ENCODE measurements at regions of chr18 and their contacts with region 1.

Region 1: DNA sequence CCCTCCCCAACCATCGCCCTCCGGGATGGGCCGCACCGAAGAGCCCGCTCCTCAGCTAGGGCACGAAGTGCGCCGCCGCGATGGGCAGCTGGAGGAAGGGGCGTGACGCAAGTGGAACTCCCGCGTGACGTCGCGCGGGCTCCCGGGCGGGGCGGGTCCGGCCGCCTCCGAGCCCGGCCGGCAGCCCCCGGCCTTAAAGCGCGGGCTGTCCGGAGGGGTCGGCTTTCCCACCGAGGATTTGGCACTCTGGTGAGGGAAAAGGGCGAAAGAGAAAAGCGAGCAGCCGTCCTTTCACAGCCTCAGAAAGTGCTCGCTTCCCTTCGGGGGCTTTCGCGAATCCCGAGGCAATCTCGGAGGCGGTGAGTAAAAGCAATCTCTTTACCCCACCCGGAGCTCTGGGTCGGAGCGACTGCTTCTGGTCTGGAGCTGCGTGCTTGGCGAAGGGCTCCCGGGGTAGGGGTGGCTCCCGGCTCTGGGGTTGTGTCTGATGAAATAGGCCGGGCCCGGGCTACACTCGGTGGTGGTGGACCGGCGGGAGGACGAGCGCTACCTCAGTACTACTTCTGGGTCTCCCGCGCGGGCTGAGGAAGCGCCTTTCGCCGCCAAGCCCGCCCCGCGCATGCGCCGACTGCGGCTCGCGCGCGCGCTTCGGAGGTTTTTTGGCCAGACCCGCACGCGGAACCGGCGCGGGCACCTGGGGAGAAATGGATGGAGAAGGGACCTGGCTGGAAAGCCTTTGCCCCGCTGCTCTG is at the start of gene RBBP8:
- DNase-seq: peak; percentile 64 to 88 (median 77)
- ATAC-seq: peak; percentile 72
- H3K4me3 ChIP-seq: peak within 1 kb of the TSS; percentile 75 to 80
- H3K4me3 Mint-ChIP-seq: peak within 1 kb of the TSS; percentile 87
- H3K27ac ChIP-seq: peak within 1 kb of the TSS; percentile 73 to 88
- H3K27ac Mint-ChIP-seq: peak within 1 kb of the TSS; percentile 60
- H3K4me1 ChIP-seq: peaks cover 4% of the 10 kb centered on the region
- H3K4me1 Mint-ChIP-seq: peaks cover 14% of the 10 kb centered on the region
- H3K27me3 ChIP-seq: no peaks in the 10 kb centered on the region
- H3K27me3 Mint-ChIP-seq: no peaks in the 10 kb centered on the region
- CTCF ChIP-seq: no peak
- total RNA-seq, gene RBBP8: 4.0 to 5.1 TPM

Region 2: GRCh38 chr18:22639026-22639463 is 294.3 kb before region 1 on chr18:
- CTCF ChIA-PET with region 1: no interaction called
- POLR2A ChIA-PET with region 1: no interaction called
- intact Hi-C with region 1: no loop called
- DNase-seq: no peak
- ATAC-seq: no peak
- H3K4me3 ChIP-seq: no peak overlapping the region
- H3K4me3 Mint-ChIP-seq: no peak overlapping the region
- H3K27ac ChIP-seq: no peak overlapping the region
- H3K27ac Mint-ChIP-seq: no peak overlapping the region
- H3K4me1 ChIP-seq: no peaks in the 10 kb centered on the region
- H3K4me1 Mint-ChIP-seq: no peaks in the 10 kb centered on the region
- H3K27me3 ChIP-seq: peaks cover 0 to 2% of the 10 kb centered on the region in 2 experiments
- H3K27me3 Mint-ChIP-seq: peaks cover 4% of the 10 kb centered on the region
- CTCF ChIP-seq: no peak

Region 3: GRCh38 chr18:22946846-22947245 is 13.5 kb after region 1 on chr18:
- CTCF ChIA-PET with region 1: interaction called, 12 read pairs
- POLR2A ChIA-PET with region 1: no interaction called
- intact Hi-C with region 1: no loop called
- DNase-seq: no peak
- ATAC-seq: no peak
- H3K4me3 ChIP-seq: no peak overlapping the region
- H3K4me3 Mint-ChIP-seq: no peak overlapping the region
- H3K27ac ChIP-seq: no peak overlapping the region
- H3K27ac Mint-ChIP-seq: no peak overlapping the region
- H3K4me1 ChIP-seq: no peaks in the 10 kb centered on the region
- H3K4me1 Mint-ChIP-seq: no peaks in the 10 kb centered on the region
- H3K27me3 ChIP-seq: no peaks in the 10 kb centered on the region
- H3K27me3 Mint-ChIP-seq: no peaks in the 10 kb centered on the region
- CTCF ChIP-seq: no peak

Region 4: DNA sequence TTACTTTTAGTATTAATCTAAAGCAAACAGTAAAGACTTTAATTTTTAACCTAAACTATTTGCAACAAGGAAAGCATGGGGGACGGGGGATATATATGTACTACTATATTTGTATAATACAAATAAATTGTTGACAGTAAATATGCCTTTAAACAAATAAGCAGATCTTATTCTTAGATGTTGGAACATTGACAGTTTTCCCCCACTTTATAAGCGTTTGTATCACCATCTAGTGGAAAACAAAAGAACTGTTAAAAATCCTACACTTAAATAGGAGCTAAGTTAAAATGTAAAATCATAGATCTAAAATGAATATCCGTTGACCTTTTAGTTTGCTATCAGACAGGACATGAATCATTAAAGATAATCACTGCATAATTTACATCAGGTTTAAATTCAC is 49.8 kb after region 1 on chr18:
- CTCF ChIA-PET with region 1: interaction called, 52 read pairs
- POLR2A ChIA-PET with region 1: no interaction called
- intact Hi-C with region 1: loop called (anchors 1 kb)
- DNase-seq: peak in 2 of 9 experiments; percentile 22 to 50
- ATAC-seq: no peak
- H3K4me3 ChIP-seq: no peak overlapping the region
- H3K4me3 Mint-ChIP-seq: no peak overlapping the region
- H3K27ac ChIP-seq: no peak overlapping the region
- H3K27ac Mint-ChIP-seq: no peak overlapping the region
- H3K4me1 ChIP-seq: no peaks in the 10 kb centered on the region
- H3K4me1 Mint-ChIP-seq: no peaks in the 10 kb centered on the region
- H3K27me3 ChIP-seq: no peaks in the 10 kb centered on the region
- H3K27me3 Mint-ChIP-seq: no peaks in the 10 kb centered on the region
- CTCF ChIP-seq: peak; percentile 65

Region 5: GRCh38 chr18:23131693-23132319 is 198.4 kb after region 1 on chr18:
- CTCF ChIA-PET with region 1: interaction called, 3 read pairs
- POLR2A ChIA-PET with region 1: no interaction called
- intact Hi-C with region 1: loop called (anchors 1 to 2 kb)
- DNase-seq: peak in 8 of 9 experiments; percentile 47 to 84 (median 62)
- ATAC-seq: peak; percentile 54
- H3K4me3 ChIP-seq: no peak overlapping the region
- H3K4me3 Mint-ChIP-seq: no peak overlapping the region
- H3K27ac ChIP-seq: no peak overlapping the region
- H3K27ac Mint-ChIP-seq: no peak overlapping the region
- H3K4me1 ChIP-seq: peaks cover 11% of the 10 kb centered on the region
- H3K4me1 Mint-ChIP-seq: peaks cover 15% of the 10 kb centered on the region
- H3K27me3 ChIP-seq: peaks cover 16 to 17% of the 10 kb centered on the region in 2 experiments
- H3K27me3 Mint-ChIP-seq: peaks cover 38% of the 10 kb centered on the region
- CTCF ChIP-seq: peak; percentile 90

Region 6: DNA sequence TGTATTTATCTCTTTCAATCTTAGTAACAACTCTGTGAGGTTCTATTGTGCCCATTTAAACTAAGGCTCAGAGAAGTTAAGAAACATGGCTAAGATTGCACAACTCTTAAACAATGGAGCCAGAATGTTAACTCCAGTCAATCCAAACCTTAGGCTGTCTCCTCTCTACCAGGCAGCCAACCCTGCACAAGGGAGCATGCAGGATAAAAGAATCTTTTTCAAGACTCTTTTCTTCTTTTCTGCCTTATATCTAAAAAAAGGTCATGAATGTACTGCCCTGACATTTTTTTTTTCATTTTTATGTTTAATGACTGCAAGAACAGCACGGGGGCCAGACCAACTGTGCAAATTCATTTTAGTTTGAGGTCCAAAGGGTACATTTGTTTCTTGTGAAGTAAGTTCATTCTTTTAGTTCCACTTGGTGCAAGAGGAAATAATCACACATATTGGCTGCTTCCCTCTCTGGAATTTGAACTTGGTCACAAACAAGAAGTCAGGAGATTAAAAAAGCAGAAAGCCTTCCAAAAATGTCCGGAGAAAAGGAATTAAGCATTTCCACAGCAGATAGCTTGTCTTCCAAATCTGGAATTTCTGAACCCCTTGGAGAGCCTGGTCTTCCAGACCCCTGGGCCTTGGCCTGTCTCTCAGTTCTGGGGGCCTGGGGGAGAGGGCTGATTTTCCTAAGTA is 423.7 kb after region 1 on chr18:
- CTCF ChIA-PET with region 1: interaction called, 11 read pairs
- POLR2A ChIA-PET with region 1: interaction called, 4 read pairs
- intact Hi-C with region 1: loop called (anchors 1 to 5 kb)
- DNase-seq: no peak
- ATAC-seq: no peak
- H3K4me3 ChIP-seq: no peak overlapping the region
- H3K4me3 Mint-ChIP-seq: no peak overlapping the region
- H3K27ac ChIP-seq: no peak overlapping the region
- H3K27ac Mint-ChIP-seq: no peak overlapping the region
- H3K4me1 ChIP-seq: peaks cover 5% of the 10 kb centered on the region
- H3K4me1 Mint-ChIP-seq: peaks cover 17% of the 10 kb centered on the region
- H3K27me3 ChIP-seq: no peaks in the 10 kb centered on the region
- H3K27me3 Mint-ChIP-seq: no peaks in the 10 kb centered on the region
- CTCF ChIP-seq: no peak

Region 7: GRCh38 chr18:23412351-23412964 is 479.1 kb after region 1 on chr18:
- CTCF ChIA-PET with region 1: interaction called, 25 read pairs
- POLR2A ChIA-PET with region 1: no interaction called
- intact Hi-C with region 1: loop called (anchors 1 to 2 kb)
- DNase-seq: no peak
- ATAC-seq: no peak
- H3K4me3 ChIP-seq: no peak overlapping the region
- H3K4me3 Mint-ChIP-seq: no peak overlapping the region
- H3K27ac ChIP-seq: no peak overlapping the region
- H3K27ac Mint-ChIP-seq: no peak overlapping the region
- H3K4me1 ChIP-seq: no peaks in the 10 kb centered on the region
- H3K4me1 Mint-ChIP-seq: no peaks in the 10 kb centered on the region
- H3K27me3 ChIP-seq: no peaks in the 10 kb centered on the region
- H3K27me3 Mint-ChIP-seq: no peaks in the 10 kb centered on the region
- CTCF ChIP-seq: no peak

Region 8: DNA sequence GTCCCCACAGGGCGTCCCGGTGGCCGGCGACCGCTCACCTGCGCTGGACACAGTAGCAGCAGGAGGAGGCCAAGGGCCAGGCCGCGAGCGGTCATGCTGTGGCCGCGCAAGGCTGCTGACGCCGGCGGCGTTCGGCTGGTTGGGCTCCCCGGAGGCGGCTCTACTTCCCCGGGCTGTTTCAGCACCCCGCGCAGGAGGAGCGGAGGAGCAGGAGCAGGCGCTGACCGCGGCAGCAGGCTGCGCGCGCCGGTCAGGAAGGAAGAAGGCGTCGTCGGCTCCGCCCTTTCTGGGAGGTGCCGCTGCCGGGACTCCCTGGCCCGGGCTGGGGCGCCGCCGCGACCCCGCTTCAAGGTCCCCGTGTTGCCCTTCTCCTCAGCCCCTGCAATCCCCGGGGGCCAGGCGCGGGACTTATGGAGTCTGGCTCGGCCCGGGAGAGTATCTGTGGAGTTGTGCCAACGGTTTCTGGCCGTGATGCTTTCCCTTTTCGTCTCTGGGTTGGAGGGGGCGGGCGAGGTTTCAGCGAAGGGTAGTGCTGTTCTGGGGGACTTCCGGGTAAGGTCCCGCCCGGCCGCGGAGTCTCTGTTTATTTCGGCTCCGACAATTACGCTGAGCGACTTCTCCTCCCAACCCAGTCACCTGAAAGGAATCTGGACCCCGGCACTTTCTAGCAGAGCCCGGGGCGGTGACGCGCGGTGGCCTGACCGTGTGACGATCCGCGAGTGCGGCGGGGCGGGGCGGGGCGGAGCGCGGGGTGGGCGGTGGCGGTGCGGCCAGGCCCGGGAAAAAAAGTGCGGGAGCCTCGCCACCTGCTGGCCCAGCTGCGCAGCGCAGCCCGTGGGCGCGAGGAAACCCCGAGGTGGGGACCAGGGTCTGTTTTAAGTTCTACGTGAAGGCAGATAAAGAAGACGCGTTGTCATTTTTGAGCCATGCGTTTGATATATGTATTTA is 653.1 kb after region 1 on chr18 and contains the start of gene NPC1:
- CTCF ChIA-PET with region 1: no interaction called
- POLR2A ChIA-PET with region 1: no interaction called
- intact Hi-C with region 1: loop called (anchors 2 to 10 kb)
- DNase-seq: peak; percentile 84 to 96 (median 91)
- ATAC-seq: peak; percentile 88
- H3K4me3 ChIP-seq: peak within 1 kb of the TSS; percentile 99 to 100
- H3K4me3 Mint-ChIP-seq: peak within 1 kb of the TSS; percentile 95
- H3K27ac ChIP-seq: peak within 1 kb of the TSS; percentile 99 to 100
- H3K27ac Mint-ChIP-seq: peak within 1 kb of the TSS; percentile 97
- H3K4me1 ChIP-seq: peaks cover 24% of the 10 kb centered on the region
- H3K4me1 Mint-ChIP-seq: peaks cover 41% of the 10 kb centered on the region
- H3K27me3 ChIP-seq: no peaks in the 10 kb centered on the region
- H3K27me3 Mint-ChIP-seq: no peaks in the 10 kb centered on the region
- CTCF ChIP-seq: peak; percentile 99
- total RNA-seq, gene NPC1: 37.3 to 38.9 TPM

Measured in CD8-positive, alpha-beta T cell (primary cell).